ENCODE measurements at regions of chr14 and their contacts with region 1.

Region 1: GRCh38 chr14:22432348-22432976 is 156.6 kb downstream of the DAD1 start:
- DNase-seq: no peak
- ATAC-seq: peak; percentile 89
- H3K4me3 Mint-ChIP-seq: peak overlapping the region; percentile 17
- H3K27ac Mint-ChIP-seq: peak overlapping the region; percentile 32
- H3K4me1 Mint-ChIP-seq: peaks cover 43% of the 10 kb centered on the region
- H3K27me3 Mint-ChIP-seq: peaks cover 14% of the 10 kb centered on the region
- CTCF ChIP-seq: no peak

Region 2: GRCh38 chr14:22420598-22421186 is 11.8 kb before region 1 on chr14:
- CTCF ChIA-PET with region 1: interaction called, 5 read pairs
- POLR2A ChIA-PET with region 1: interaction called, 5 read pairs
- intact Hi-C with region 1: loop called (anchors 1 kb)
- DNase-seq: no peak
- ATAC-seq: no peak
- H3K4me3 Mint-ChIP-seq: no peak overlapping the region
- H3K27ac Mint-ChIP-seq: no peak overlapping the region
- H3K4me1 Mint-ChIP-seq: peaks cover 31% of the 10 kb centered on the region
- H3K27me3 Mint-ChIP-seq: no peaks in the 10 kb centered on the region
- CTCF ChIP-seq: no peak

Region 3: GRCh38 chr14:22448905-22449599 is 16.6 kb after region 1 on chr14:
- CTCF ChIA-PET with region 1: interaction called, 3 read pairs
- POLR2A ChIA-PET with region 1: interaction called, 10 read pairs
- intact Hi-C with region 1: loop called (anchors 1 kb)
- DNase-seq: no peak
- ATAC-seq: peak; percentile 58
- H3K4me3 Mint-ChIP-seq: peak overlapping the region; percentile 3
- H3K27ac Mint-ChIP-seq: peak overlapping the region; percentile 78
- H3K4me1 Mint-ChIP-seq: peaks cover 23% of the 10 kb centered on the region
- H3K27me3 Mint-ChIP-seq: no peaks in the 10 kb centered on the region
- CTCF ChIP-seq: no peak

Measured in activated B cell treated with CpG ODN at 0.5 μM for 24 hours (primary cell).